ENCODE measurements at regions of chr11 and their contacts with region 1.

Region 1: GRCh38 chr11:99739464-99740089 is 718.8 kb downstream of the CNTN5 start:
- DNase-seq: no peak
- ATAC-seq: no peak

Region 2: GRCh38 chr11:99015634-99016454 is 723.7 kb before region 1 on chr11:
- intact Hi-C with region 1: loop called (anchors 10 kb)
- DNase-seq: no peak
- ATAC-seq: no peak

Region 3: GRCh38 chr11:99671808-99672409 is 67.7 kb before region 1 on chr11:
- intact Hi-C with region 1: no loop called
- DNase-seq: no peak
- ATAC-seq: no peak

Region 4: GRCh38 chr11:99759787-99760186 is 20.2 kb after region 1 on chr11:
- intact Hi-C with region 1: no loop called
- DNase-seq: no peak
- ATAC-seq: no peak